Lower leg skin (tissue), 4 donors: ENCODE measurements at regions of chr3 and their contacts with region 1.

Region 1: DNA sequence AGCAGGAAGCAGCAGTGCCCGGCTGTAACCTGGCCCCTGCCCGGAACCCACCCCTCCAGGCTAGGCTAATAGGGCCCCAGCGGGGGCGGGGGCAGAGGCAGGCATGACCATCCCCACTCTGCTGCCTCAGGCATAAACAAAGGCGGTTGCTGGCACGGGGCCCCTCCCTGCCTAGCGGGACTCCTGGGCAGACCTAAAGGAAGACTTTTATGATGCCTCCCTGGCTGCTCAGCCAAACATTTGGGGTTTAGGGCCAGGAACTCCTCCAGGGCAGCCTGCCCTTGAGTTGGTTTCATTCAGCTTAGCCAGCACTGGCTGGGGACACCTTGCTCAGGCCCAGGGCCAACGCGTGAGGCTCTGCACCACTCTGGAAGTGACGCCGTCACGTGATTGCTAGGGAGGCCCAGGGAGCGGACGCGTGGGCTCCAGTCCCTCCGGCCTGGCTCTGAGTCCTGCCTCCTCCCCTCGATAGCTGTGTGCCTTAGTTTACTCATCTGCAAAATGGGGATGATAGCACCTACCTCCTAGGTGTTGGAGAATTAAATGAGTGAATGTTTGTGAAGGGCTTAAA is 27.7 kb downstream of the HDAC11 start:
- DNase-seq: no peak
- H3K4me3 ChIP-seq: no peak overlapping the region
- CTCF ChIP-seq: no peak
- POLR2A ChIP-seq: no peak

Region 2: GRCh38 chr3:13629644-13630043 is 121.8 kb after region 1 on chr3:
- intact Hi-C with region 1: loop called (anchors 5 kb)
- DNase-seq: no peak
- H3K4me3 ChIP-seq: no peak overlapping the region
- CTCF ChIP-seq: no peak
- POLR2A ChIP-seq: no peak